Cardiac septum (tissue), 1 donor: ENCODE measurements at regions of chr9 and their contacts with region 1.

Region 1: DNA sequence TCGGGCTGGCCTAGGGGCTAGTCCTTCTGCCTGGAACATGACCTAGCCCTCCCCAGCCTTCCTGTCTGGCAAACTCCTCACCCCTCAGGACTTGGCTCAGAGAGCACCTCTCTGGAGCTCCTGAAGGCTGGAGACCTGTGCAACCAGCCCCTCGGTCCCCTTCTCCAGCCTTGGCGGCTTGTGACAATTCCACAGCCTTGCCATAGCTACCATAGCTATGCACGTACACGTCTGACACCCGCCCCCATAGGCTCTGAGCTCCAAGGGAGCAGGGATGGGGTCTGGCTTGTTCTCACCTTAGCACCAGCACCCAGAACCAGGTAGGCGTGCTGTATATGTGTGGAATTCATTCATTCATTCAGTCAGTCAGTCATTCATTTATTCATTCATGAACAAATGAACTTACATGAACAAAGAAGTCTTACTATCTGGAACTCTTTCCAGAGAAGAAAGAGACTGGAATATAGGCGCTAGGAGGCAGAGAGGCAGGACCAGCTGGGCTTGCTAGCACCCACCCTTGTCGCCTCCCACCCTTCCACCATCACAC is 49.8 kb downstream of the NTNG2 start:
- DNase-seq: no peak

Region 2: GRCh38 chr9:132182314-132183091 is 29.1 kb before region 1 on chr9:
- intact Hi-C with region 1: loop called (anchors 2 kb)
- DNase-seq: no peak